ENCODE measurements at regions of chr7 and their contacts with region 1.

Region 1: DNA sequence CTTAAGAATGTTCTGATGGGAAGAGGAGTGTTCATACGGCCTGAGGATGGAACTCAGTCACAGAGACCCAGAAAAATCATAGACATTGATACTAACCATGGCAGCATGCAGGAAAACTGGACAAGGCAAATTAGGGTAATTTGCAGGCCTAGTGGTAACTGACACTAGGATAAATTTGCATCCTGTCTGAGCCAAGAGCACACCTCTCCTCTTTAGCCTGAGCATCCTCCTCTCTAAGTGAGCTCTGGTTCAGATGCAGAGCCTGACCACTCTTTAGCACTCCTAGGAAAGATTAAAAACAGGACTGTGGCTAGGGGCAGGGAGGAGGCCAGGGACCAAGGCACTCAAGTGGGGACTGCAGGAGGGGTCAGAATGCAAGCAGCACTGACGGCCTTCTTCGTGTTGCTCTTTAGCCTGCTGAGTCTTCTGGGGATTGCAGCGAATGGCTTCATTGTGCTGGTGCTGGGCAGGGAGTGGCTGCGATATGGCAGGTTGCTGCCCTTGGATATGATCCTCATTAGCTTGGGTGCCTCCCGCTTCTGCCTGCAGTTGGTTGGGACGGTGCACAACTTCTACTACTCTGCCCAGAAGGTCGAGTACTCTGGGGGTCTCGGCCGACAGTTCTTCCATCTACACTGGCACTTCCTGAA is at the start of gene TAS2R41:
- DNase-seq: no peak
- H3K4me3 Mint-ChIP-seq: no peak within 1 kb of the TSS
- H3K27ac Mint-ChIP-seq: no peak within 1 kb of the TSS
- H3K4me1 Mint-ChIP-seq: peaks cover 24% of the 10 kb centered on the region
- H3K27me3 Mint-ChIP-seq: no peaks in the 10 kb centered on the region
- total RNA-seq, gene TAS2R41: not detected

Region 2: DNA sequence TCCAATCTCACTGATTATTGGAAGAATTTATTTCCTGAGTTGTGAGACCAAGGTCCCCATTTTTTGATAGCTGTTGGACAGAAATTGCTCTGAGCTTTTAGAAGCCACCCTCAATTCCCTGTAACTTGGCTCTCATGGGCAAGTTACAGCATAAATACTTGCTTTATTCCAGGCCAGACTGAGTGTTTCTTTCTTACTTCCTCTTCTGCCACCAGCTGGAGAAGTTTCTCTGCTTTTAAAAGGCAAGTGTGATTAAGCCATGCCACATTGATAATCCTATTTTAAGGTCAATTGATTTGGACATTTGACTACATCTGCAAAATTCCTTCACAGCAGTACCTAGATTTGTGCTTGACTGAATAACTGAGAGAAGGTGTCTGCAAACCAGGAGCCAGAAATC is 14.1 kb before region 1 on chr7:
- CTCF ChIA-PET with region 1: no interaction called
- intact Hi-C with region 1: loop called (anchors 2 kb)
- DNase-seq: no peak
- H3K4me3 Mint-ChIP-seq: no peak overlapping the region
- H3K27ac Mint-ChIP-seq: no peak overlapping the region
- H3K4me1 Mint-ChIP-seq: no peaks in the 10 kb centered on the region
- H3K27me3 Mint-ChIP-seq: no peaks in the 10 kb centered on the region

Measured in activated naive CD4-positive, alpha-beta T cell treated with anti-CD3 and anti-CD28 coated beads for 36 hours (primary cell).